Activated naive CD4-positive, alpha-beta T cell treated with anti-CD3 and anti-CD28 coated beads for 36 hours (primary cell): ENCODE measurements at regions of chr5 and their contacts with region 1.

Region 1: DNA sequence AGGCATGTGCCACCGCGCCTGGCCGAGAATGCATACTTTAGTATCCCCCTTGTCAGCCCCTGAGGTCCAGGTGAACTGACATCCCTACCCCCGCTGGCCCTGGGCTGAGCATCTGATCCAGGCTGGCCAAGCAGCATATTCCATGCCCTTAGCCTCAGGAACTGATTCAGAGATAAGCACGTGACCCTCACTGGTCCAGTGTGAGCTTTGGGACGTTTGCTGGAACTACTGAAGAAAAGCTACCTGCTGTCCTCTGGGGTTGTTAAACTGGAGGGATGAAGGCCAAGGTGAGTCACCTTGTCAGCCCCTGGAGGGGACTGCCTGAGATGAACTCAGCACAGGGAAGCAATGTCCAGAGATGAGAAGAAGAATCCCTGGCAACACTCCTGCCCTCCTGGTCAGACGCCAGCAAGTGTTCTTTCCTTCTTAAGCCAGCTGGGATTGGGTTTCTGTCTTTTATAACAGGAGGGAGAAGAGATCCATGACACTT is 59.1 kb upstream of the FBXW11 start:
- DNase-seq: no peak
- H3K4me3 Mint-ChIP-seq: no peak overlapping the region
- H3K27ac Mint-ChIP-seq: no peak overlapping the region
- H3K4me1 Mint-ChIP-seq: peaks cover 56% of the 10 kb centered on the region
- H3K27me3 Mint-ChIP-seq: no peaks in the 10 kb centered on the region

Region 2: DNA sequence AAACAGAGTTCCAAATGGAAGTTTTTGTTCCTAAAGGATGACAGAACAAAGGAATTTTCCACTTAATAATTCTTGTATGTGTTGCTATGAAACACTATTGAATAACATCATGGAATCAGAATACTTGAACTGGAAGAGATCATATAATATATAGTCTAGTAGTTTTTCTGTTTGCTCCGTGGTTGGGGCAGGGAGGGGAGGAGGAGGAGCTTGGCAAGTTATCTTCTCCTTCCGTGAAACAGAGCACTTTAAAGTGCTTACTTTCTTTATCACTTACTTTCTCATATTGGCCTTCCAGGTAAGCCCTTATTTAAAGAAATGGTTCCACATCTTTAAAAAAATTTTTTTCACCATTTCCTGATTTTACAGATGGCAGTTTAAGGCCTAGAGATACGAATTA is 922.4 kb before region 1 on chr5:
- CTCF ChIA-PET with region 1: no interaction called
- intact Hi-C with region 1: no loop called
- DNase-seq: no peak
- H3K4me3 Mint-ChIP-seq: no peak overlapping the region
- H3K27ac Mint-ChIP-seq: no peak overlapping the region
- H3K4me1 Mint-ChIP-seq: no peaks in the 10 kb centered on the region
- H3K27me3 Mint-ChIP-seq: no peaks in the 10 kb centered on the region

Region 3: DNA sequence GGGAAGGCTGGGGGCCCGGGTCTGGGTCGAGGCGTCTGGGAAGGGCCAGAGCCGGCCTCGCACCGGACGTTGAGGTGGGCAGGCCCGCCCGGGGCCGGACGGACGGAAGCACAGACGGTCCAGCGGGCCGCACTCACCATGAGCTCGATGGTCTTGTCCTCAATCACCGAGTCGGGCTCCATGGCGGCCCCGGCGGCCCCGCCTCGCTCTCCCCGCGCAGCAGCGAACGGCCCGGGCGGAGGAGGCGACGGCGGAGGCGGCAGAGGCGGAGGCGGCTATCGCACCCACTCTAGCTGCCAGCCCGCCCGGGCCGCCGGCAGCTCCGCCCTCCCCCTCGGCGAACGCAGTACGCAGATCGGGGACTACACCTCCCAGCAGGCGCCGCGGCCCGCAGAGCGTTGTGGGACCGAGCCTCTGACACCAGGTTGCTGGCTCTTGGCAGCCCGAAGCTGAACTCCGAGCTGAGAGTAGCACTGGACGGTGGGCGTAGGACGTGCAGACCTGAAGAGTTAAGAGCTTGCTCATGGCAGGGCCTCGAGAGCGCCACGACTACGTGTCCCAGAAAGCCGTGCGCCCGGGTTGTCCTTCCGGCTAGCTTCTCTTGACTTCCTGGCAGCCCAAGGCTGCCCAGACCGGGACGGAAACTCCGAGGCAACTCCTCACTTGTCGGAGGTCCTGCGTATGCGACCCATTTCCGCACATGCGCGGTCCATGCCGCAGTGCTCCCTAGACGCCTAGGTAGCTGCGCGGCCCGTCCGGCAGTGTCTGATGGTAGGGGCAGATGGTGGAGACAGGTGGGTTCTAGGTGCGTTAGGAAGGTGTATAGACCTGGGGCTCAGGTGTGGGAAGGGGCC is 59.0 kb before region 1 on chr5 and contains the start of gene FBXW11:
- CTCF ChIA-PET with region 1: no interaction called
- intact Hi-C with region 1: loop called (anchors 1 kb)
- DNase-seq: peak; percentile 96
- H3K4me3 Mint-ChIP-seq: peak within 1 kb of the TSS; percentile 96
- H3K27ac Mint-ChIP-seq: peak within 1 kb of the TSS; percentile 99
- H3K4me1 Mint-ChIP-seq: peaks cover 46% of the 10 kb centered on the region
- H3K27me3 Mint-ChIP-seq: no peaks in the 10 kb centered on the region
- total RNA-seq, gene FBXW11: 32.8 to 35.5 TPM

Region 4: GRCh38 chr5:172144291-172144815 is 78.8 kb after region 1 on chr5:
- CTCF ChIA-PET with region 1: no interaction called
- intact Hi-C with region 1: no loop called
- DNase-seq: no peak
- H3K4me3 Mint-ChIP-seq: no peak overlapping the region
- H3K27ac Mint-ChIP-seq: peak overlapping the region; percentile 48
- H3K4me1 Mint-ChIP-seq: peaks cover 84% of the 10 kb centered on the region
- H3K27me3 Mint-ChIP-seq: no peaks in the 10 kb centered on the region

Region 5: DNA sequence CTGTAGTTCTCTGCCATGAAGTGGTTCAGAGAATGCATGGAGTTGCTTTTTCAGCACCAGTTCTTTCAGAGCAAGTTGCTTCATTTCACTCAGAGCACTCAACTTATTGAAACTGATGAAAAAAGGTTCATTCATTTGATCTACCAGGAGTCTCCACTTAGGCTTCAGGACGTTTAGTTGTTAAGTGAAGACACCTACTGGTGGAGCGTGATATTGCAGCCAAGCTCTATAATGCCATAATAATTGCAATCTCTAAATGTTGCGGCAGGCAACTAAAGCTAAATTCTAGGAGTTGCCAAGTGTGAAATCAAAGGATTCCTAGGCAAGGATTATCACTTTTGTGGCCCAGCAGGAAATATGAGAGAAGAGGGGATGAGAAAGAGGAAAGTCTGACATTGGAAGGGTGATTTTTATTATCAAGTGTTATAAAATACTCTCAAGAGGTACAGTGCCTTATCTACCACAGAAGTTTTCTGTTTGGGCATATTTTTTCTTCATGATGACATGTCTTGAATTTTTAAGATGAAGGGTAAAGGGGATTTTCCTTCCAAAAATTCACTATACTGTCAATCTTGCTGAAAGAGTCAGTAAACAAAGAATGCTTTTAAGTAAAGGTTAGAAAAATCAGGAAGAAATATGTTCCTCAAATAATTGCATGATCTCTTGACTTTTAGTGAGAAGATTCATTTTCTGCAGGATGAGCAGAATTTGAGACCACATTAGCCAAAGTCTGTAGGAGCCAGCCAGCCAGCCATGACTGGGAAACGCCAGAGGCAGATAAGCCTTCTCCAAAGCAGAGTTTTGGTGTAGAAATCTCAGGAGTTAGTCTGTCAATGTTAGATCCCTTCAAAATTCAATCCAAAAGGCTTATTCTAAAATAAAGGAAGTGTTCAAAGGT is 305.4 kb after region 1 on chr5:
- CTCF ChIA-PET with region 1: no interaction called
- intact Hi-C with region 1: loop called (anchors 2 kb)
- DNase-seq: peak; percentile 69
- H3K4me3 Mint-ChIP-seq: no peak overlapping the region
- H3K27ac Mint-ChIP-seq: no peak overlapping the region
- H3K4me1 Mint-ChIP-seq: no peaks in the 10 kb centered on the region
- H3K27me3 Mint-ChIP-seq: no peaks in the 10 kb centered on the region